Left ventricle myocardium superior (tissue), 1 donor: ENCODE measurements at regions of chr10 and their contacts with region 1.

Region 1: DNA sequence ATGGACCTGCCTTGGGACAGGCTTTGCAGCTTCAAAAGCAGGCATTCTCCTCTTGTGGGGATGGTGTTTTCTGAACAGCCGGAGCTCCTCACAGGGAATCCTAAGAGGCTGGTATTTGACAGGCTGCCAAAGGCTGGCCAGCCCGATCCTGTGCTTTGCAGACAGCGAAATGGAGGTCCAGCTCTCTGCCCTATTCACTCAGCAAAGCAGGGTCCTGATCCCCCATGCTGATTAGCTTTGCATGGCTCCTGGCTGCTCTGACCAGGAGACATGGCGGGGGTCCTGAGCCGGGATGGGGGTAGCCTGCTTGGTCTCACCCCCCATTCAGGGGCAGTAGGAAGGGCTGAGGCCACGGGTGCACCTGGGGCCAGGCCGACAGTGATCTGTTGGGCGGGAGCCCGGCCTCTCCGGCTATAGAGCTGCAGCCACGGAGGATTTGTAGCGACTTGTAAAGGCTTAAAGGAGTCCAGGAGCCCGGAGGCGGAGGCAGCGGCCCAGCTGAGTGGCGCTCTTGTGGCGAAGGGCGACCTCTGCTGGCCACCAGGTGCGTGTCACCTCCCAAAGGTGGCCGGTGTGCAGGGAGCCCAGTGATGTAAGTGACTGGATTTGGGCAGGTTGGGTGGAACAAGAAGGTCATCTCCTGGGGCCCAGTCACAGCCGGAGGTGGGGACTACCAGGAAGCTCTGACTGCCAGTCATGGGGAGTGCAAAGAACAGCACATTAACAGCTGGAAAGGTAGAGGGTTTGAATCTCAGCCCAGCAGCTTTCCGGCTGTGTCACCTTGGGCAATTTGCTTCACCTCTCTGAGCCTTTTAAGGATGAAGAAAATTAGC is 126.5 kb downstream of the ZMIZ1 start:
- DNase-seq: peak; percentile 93
- ATAC-seq: peak; percentile 81

Region 2: GRCh38 chr10:78047314-78047891 is 1147.9 kb before region 1 on chr10:
- intact Hi-C with region 1: loop called (anchors 10 kb)
- DNase-seq: peak; percentile 91
- ATAC-seq: peak; percentile 87

Region 3: DNA sequence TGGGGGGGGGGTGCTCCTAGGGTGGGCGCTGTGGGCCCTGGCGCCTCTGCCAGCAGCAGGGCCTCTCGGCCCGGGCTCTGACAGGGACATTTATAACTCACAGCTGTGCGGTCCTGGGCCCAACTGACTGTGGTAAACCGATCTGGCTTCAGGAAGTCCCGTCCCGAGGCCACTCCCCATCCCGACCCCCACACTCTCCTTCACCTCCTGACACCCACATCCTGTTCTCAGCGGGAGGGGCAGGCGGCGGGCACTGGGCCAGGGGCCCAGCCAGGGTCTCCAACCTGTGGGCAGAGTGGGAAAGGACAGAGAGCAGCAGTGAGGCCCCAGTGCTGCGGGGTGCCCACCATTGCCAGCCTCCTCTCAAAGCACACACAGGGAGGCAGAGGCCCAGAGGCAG is 57.5 kb before region 1 on chr10:
- intact Hi-C with region 1: loop called (anchors 10 kb)
- DNase-seq: peak; percentile 70
- ATAC-seq: peak; percentile 13

Region 4: GRCh38 chr10:79286318-79286951 is 91.1 kb after region 1 on chr10:
- intact Hi-C with region 1: no loop called
- DNase-seq: peak; percentile 89
- ATAC-seq: peak; percentile 53